Activated CD8-positive, alpha-beta T cell treated with anti-CD3 and anti-CD28 coated beads for 36 hours (primary cell): ENCODE measurements at regions of chr5 and their contacts with region 1.

Region 1: GRCh38 chr5:73558950-73559349 is 6.5 kb downstream of the ANKRA2 start:
- DNase-seq: no peak
- ATAC-seq: no peak
- H3K4me3 Mint-ChIP-seq: no peak overlapping the region
- H3K27ac Mint-ChIP-seq: no peak overlapping the region
- H3K4me1 Mint-ChIP-seq: peaks cover 13% of the 10 kb centered on the region
- H3K27me3 Mint-ChIP-seq: no peaks in the 10 kb centered on the region
- CTCF ChIP-seq: no peak

Region 2: DNA sequence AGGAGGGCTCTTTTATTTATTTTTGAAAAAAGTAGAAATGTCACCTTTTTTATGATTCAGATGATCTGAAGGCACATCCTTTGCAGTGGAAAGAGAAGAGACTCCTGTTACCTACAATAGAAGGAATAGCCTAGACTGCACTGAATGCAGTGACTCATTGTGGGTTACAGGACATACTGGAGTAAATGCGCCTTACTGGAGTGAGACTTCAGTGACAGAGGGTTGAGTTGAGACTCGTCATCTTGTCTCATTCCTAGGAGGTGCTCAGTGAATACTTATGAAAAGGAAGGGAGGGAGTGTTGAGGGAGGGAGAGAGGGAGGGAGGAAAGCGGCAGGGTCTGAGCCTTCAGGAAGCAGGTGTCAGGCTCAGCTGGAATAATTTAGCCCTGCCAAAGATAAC is 18.8 kb before region 1 on chr5:
- CTCF ChIA-PET with region 1: interaction called, 10 read pairs
- POLR2A ChIA-PET with region 1: no interaction called
- intact Hi-C with region 1: no loop called
- DNase-seq: no peak
- ATAC-seq: no peak
- H3K4me3 Mint-ChIP-seq: no peak overlapping the region
- H3K27ac Mint-ChIP-seq: no peak overlapping the region
- H3K4me1 Mint-ChIP-seq: peaks cover 2% of the 10 kb centered on the region
- H3K27me3 Mint-ChIP-seq: peaks cover 17% of the 10 kb centered on the region
- CTCF ChIP-seq: no peak

Region 3: DNA sequence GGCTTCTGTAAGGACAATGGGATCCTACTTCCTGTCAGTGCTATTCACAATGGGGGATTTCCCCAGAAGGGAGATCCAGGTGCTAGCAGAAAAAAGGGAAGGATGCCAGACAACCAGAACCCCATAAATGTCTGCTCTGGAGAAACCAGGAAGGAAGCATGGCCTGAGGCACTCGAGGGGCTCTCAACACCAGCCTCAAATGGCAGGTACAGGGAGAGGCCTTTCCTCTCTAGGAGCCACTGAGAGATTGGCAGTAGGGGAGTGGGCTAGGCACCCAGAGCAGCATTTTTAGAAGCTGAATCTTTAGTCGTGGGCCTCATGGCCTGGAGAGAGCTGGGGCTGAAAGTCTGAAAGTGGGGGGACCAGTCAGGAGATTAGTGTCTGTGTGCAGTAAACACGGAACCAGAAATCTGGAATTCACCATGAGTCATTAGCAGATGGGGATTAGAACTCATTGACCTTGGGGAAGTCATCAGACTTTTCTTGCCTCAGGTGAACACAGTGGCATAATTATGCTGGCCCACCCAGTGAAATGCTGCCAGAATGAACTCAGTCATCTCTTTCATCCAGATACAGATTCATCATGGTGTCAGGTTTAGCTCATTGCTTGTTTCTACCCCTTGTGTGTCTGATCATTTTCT is 95.3 kb after region 1 on chr5:
- CTCF ChIA-PET with region 1: no interaction called
- POLR2A ChIA-PET with region 1: no interaction called
- intact Hi-C with region 1: no loop called
- DNase-seq: no peak
- ATAC-seq: no peak
- H3K4me3 Mint-ChIP-seq: no peak overlapping the region
- H3K27ac Mint-ChIP-seq: no peak overlapping the region
- H3K4me1 Mint-ChIP-seq: no peaks in the 10 kb centered on the region
- H3K27me3 Mint-ChIP-seq: peaks cover 4% of the 10 kb centered on the region
- CTCF ChIP-seq: no peak